ENCODE measurements at regions of chr15 and their contacts with region 1.

Region 1: DNA sequence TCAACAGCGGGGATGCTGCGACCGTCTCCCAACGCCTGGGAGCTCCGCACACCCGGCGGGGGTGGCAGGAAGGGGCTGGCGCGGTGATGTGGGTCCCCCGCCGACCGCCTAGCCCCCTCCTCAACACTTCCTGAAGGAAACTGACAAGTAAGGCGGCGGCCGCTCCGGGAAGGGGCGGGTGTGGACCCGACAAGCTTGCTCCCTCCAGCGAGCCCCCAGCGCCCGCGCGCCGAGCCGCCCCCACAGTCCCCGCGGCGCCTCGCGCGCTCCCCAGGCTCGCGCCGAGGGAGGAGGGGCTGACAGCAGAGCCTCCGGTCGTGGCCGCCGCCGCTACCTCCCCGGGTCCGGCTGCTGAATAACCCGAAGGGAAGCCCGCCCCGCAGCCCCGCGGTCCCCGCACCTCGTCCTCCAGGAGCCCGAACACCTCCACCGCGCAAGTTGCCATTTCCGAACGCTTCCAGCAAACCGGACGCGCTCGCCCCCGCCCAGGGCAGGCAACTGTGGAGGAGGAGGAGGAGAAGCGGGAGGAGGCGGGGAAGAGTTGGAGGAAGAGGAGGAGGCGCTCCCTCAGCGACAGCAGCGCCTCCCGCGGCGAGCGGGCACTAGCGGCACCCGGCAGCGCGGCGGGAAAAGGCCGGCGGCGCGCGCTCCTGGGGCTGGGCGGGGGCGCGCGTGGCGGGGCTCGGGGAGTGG is at the start of gene NEDD4:
- DNase-seq: peak; percentile 82
- H3K4me3 ChIP-seq: peak within 1 kb of the TSS; percentile 75 to 93
- H3K27ac ChIP-seq: peak within 1 kb of the TSS; percentile 89 to 93
- H3K4me1 ChIP-seq: no peaks in the 10 kb centered on the region
- H3K27me3 ChIP-seq: no peaks in the 10 kb centered on the region
- CTCF ChIP-seq: peak in 2 of 4 experiments; percentile 52 to 53
- POLR2A ChIP-seq: peak; percentile 39
- total RNA-seq, gene NEDD4: 9.5 to 14.8 TPM

Region 2: GRCh38 chr15:55389276-55389631 is 604.0 kb before region 1 on chr15:
- intact Hi-C with region 1: no loop called
- DNase-seq: no peak
- H3K4me3 ChIP-seq: no peak overlapping the region
- H3K27ac ChIP-seq: no peak overlapping the region
- H3K4me1 ChIP-seq: no peaks in the 10 kb centered on the region
- H3K27me3 ChIP-seq: no peaks in the 10 kb centered on the region
- CTCF ChIP-seq: no peak
- POLR2A ChIP-seq: no peak

Region 3: DNA sequence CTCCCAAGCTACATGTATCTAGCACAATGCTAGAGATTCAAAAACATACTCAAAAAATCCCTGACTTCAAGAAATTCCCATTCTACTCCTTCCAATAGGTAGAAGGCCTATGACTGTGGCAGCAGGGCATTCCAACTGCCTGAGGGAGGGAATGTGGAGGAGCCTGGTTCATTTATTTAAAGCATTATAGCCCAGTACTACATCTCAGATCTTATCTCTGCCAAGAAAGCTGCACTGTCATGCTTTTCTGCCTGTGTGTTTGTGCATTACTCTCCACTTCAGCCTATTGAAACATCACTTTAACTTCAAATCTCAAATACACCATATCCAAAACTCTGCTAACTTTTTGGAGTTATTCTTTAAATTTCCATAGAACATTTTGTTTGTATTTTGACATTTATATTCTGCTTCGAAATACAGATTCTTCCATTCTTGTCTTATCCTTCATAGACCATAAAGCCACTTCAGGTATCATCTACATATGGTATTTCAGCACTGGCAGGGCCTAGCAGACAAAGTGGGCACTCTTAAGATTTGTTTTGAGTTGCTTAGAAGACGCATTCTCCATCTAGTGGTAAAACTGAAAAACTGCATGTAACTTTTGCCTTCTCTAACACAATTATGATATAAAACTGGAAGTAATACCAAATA is 59.3 kb after region 1 on chr15:
- intact Hi-C with region 1: loop called (anchors 5 kb)
- DNase-seq: no peak
- H3K4me3 ChIP-seq: no peak overlapping the region
- H3K27ac ChIP-seq: no peak overlapping the region
- H3K4me1 ChIP-seq: no peaks in the 10 kb centered on the region
- H3K27me3 ChIP-seq: no peaks in the 10 kb centered on the region
- CTCF ChIP-seq: peak in 3 of 4 experiments; percentile 58 to 74 (median 63)
- POLR2A ChIP-seq: no peak

Region 4: DNA sequence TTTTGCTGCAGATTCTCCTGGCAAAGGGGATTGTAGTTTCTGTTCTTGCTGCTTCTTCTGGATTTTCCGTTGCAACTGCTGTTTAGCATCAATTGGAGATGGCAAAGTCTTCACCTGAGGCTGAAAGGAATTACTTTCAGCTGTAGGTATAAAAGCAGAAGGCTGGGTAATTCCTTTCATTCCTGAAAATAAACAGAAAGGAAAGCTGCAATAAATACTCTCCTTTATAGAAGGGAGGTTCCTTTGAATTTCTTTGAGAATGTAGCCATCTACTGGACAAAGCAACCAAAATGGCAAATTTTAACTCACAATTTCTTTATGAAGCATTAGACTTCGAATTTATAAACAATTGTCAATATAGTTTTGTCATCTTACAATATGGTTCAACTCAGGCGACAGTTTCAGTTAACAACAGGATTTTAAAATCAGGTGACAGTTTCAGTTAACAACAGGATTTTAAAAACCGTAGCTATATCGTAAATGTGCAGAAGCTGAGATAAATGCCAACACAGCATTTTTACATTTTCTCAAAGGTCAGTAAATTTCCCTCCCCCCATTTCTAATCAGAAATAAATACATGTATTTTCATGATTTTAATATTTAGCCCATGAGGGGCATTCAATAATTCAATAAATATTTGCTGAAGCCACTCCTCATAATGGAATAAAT is 105.1 kb after region 1 on chr15:
- intact Hi-C with region 1: loop called (anchors 10 kb)
- DNase-seq: no peak
- H3K4me3 ChIP-seq: no peak overlapping the region
- H3K27ac ChIP-seq: no peak overlapping the region
- H3K4me1 ChIP-seq: no peaks in the 10 kb centered on the region
- H3K27me3 ChIP-seq: no peaks in the 10 kb centered on the region
- CTCF ChIP-seq: no peak
- POLR2A ChIP-seq: no peak